ENCODE measurements at regions of chr11 and their contacts with region 1.

Region 1: DNA sequence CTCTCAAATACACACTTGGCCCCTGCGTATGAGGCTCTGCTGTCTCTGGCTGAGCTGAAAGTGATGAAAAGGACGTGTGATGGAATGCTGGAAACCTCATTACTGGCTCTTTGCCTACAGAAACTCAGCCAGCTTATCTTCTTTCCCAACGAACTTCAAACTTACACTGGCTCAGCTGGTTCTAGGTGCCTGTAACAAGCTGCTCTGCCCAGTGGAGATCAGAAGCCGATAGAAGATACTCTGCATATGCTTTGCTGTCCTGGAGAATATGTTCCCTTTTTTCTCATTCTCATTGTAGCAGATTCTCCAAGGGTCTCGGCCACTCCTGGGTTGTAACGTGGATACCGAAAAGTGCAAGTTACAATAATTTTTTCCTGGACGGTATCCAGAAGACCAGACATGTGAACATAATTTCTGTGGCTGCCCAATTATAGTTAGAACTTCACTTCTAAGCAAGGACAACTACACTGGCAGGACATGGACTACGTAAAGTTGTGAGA is 405.3 kb upstream of the CCDC90B start:
- DNase-seq: peak in 1 of 2 donors; percentile 22
- H3K4me3 ChIP-seq: no peak overlapping the region
- H3K27ac ChIP-seq: no peak overlapping the region
- H3K4me1 ChIP-seq: peaks cover 0 to 24% (median 7%) of the 10 kb centered on the region in 4 donors
- H3K27me3 ChIP-seq: no peaks in the 10 kb centered on the region
- CTCF ChIP-seq: no peak

Region 2: DNA sequence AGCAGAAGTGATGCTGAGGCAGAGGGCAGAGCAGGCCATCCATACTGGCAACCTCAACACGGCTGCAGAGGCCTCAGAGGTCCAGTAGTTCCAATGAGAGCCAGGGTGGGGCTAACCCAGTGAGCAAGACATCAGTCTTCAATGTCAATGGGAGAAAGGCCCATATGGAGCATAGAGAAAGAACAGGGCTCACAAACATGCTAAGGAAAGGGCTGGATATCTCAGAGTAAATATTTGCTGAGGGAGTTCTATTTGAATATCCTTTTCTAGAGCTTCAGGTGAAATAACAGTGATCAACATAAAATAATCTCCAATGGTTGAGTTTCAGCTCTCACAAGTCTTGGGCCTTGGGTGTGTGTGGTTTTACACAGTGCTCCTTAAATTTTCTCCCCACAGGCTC is 354.5 kb before region 1 on chr11:
- intact Hi-C with region 1: no loop called
- DNase-seq: no peak
- H3K4me3 ChIP-seq: no peak overlapping the region
- H3K27ac ChIP-seq: no peak overlapping the region
- H3K4me1 ChIP-seq: no peaks in the 10 kb centered on the region
- H3K27me3 ChIP-seq: no peaks in the 10 kb centered on the region
- CTCF ChIP-seq: no peak

Region 3: DNA sequence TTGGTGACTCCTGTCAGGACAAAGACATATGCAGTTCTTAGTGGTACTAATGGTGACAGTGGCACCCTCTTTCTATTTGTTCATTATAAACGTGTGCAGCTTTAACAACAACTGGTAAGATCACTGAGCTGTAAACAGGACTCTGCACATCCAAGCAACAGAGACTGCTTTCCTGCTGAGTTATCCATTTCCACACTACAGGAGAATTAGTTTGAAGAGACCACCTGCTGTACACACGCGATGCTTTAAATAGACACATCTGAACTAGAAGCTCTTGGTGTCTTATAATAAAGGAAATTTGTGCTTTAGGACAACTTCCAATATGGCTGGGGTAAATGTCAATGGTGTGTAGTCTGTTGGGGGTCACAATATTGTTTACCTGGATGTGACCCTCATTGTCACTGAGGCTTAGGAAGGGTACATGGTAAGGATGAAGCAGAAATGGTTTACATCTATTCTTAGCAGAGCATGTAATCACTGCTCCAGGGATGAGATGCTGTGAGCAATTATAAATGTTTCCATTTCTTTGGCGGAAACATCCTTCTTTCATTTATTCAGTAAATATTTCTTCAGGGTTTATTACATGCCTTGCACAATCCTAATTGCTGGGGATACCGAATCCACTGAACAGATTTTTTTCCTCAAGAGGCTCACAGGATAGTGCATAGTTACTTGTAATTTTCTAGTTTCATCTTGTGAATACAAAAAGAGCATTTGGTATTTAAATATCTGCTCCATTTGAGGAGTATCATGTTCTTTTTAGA is 51.3 kb before region 1 on chr11:
- intact Hi-C with region 1: loop called (anchors 10 kb)
- DNase-seq: no peak
- H3K4me3 ChIP-seq: no peak overlapping the region
- H3K27ac ChIP-seq: no peak overlapping the region
- H3K4me1 ChIP-seq: peaks cover 0 to 18% (median 2%) of the 10 kb centered on the region in 4 donors
- H3K27me3 ChIP-seq: no peaks in the 10 kb centered on the region
- CTCF ChIP-seq: no peak